AG04450 (cell line): ENCODE measurements at regions of chr10 and their contacts with region 1.

Region 1: DNA sequence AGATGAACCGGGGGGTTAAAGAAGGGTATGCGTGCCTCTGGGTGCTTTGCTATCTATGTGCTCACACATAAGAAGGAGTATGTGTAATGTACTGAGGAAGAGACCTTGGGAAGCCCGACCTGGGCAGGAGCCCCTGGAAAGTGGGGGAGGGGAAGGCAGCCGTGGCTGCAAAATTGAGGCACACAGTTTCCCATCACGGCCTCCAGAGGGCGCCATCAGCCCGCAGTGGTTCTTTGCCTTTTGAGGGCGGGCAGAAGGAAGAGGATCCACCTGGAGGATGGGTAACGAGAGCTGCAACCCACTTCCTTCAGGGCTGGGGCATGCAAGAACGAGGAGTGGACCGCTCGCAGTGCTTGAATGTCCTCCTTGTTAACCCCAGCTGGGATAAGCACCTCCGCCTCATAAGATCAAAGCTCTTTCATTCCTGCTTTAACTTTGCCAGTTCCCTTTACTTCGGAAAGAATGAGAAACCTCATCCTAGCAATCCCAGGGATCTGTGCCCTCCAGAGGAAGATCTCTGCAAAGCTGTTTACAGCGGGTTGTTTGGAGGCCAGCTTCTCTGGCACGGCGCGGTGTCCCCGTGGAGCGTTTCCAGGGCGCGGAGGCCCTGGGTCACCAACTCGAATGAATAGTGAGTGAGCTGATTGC is 77.9 kb downstream of the PCGF5 start:
- DNase-seq: peak; percentile 55
- H3K4me3 ChIP-seq: peak overlapping the region; percentile 54
- H3K27ac ChIP-seq: peak overlapping the region; percentile 21
- H3K27me3 ChIP-seq: no peaks in the 10 kb centered on the region
- CTCF ChIP-seq: peak; percentile 95

Region 2: DNA sequence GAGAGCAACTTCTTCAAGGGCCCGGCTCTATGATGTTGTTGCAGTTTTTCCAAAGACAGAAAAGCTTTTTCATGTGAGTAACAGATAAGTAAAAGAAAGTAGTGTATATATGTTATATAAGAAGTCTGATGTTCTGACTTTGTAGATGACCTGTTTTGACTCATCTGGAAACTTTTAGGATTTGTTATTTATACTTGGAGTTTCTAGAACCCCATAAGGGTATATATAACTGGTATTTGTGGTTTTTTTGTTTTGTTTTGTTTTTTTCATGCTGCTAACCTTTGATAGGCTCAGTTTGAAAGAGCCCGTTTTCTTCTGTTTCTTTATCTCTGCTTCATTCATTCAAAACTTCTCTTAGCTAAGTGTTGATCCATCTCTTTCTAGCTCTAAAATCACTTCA is 419.3 kb before region 1 on chr10:
- CTCF ChIA-PET with region 1: interaction called, 15 read pairs
- POLR2A ChIA-PET with region 1: no interaction called
- DNase-seq: no peak
- H3K4me3 ChIP-seq: no peak overlapping the region
- H3K27ac ChIP-seq: no peak overlapping the region
- H3K27me3 ChIP-seq: no peaks in the 10 kb centered on the region
- CTCF ChIP-seq: no peak

Region 3: DNA sequence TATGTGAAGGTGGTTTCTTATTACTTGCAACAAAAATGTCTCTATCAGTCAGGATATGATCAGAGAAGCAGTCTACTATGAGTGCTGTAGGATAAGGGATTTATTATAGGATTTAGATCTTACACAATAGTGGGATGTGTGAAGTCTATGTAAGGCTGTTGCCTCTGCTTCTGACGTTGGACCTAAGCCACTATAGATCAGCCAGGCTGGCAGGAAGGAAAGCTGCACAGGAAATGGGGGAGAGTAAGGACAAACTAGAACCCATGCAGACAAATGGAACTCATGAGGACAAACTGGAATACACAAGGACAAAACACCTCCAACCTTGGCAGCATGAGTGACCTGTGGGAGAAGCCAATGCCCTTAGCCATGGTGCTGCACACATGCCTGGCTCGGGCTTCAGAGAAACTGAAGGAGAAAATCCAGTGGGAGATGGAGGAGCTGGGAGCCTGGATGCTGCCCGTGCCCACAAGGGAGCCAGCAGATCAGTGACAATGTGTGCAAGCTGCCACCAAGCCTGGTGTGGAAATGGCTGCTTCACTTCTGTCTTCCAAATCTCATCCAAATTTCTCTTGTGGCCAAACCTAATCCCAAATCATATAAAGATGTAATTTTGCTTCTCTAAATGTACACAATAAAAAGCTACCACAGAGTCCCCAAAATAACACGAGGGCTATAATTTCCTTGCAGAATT is 224.9 kb before region 1 on chr10:
- CTCF ChIA-PET with region 1: no interaction called
- POLR2A ChIA-PET with region 1: no interaction called
- DNase-seq: no peak
- H3K4me3 ChIP-seq: no peak overlapping the region
- H3K27ac ChIP-seq: no peak overlapping the region
- H3K27me3 ChIP-seq: peaks cover 7% of the 10 kb centered on the region
- CTCF ChIP-seq: no peak

Region 4: GRCh38 chr10:91313796-91314485 is 15.6 kb after region 1 on chr10:
- CTCF ChIA-PET with region 1: interaction called, 110 read pairs
- POLR2A ChIA-PET with region 1: no interaction called
- DNase-seq: peak; percentile 59
- H3K4me3 ChIP-seq: no peak overlapping the region; the same call in 1 of the 2 replicates
- H3K27ac ChIP-seq: peak overlapping the region; percentile 91
- H3K27me3 ChIP-seq: peaks cover under 1% of the 10 kb centered on the region
- CTCF ChIP-seq: no peak

Region 5: GRCh38 chr10:91367127-91367531 is 68.8 kb after region 1 on chr10:
- CTCF ChIA-PET with region 1: interaction called, 63 read pairs
- POLR2A ChIA-PET with region 1: no interaction called
- DNase-seq: no peak
- H3K4me3 ChIP-seq: no peak overlapping the region
- H3K27ac ChIP-seq: no peak overlapping the region
- H3K27me3 ChIP-seq: no peaks in the 10 kb centered on the region
- CTCF ChIP-seq: no peak

Region 6: GRCh38 chr10:91493313-91493712 is 195.0 kb after region 1 on chr10:
- CTCF ChIA-PET with region 1: interaction called, 12 read pairs
- POLR2A ChIA-PET with region 1: no interaction called
- DNase-seq: no peak
- H3K4me3 ChIP-seq: no peak overlapping the region
- H3K27ac ChIP-seq: no peak overlapping the region
- H3K27me3 ChIP-seq: no peaks in the 10 kb centered on the region
- CTCF ChIP-seq: peak; percentile 38

Region 7: DNA sequence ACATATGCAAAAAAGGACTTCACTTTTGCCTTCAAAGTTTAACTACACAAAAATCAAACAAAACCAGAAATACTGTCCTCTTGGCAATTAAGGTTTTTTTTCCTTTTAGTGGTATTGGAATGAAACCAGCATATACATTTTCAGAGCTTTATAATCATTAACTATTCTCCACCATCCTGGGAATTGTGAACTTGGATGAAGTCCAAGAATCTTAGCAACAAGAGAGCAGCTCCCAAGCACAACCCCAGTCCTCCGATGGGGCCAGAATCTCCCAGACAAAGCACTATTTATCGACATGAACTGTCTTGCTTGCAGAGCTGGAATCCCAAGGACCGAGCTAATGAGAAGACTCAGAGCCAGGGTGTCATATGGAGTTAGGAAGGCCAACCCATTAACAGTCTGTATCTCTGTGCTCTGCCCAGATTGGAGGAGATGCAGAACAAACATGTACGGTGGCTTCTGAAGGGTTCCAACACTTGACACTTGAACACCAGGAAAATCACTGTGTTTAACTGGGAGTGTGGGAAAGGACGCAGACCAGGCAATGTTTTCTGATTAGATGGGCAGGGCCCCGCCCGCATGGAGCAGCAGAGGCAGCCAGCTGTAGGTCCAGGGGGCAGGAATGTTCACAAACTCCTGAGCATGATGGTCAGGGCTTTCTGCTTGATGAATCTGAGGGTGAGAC is 299.0 kb after region 1 on chr10:
- CTCF ChIA-PET with region 1: no interaction called
- POLR2A ChIA-PET with region 1: no interaction called
- DNase-seq: no peak
- H3K4me3 ChIP-seq: no peak overlapping the region
- H3K27ac ChIP-seq: peak overlapping the region; percentile 58
- H3K27me3 ChIP-seq: no peaks in the 10 kb centered on the region
- CTCF ChIP-seq: no peak

Region 8: DNA sequence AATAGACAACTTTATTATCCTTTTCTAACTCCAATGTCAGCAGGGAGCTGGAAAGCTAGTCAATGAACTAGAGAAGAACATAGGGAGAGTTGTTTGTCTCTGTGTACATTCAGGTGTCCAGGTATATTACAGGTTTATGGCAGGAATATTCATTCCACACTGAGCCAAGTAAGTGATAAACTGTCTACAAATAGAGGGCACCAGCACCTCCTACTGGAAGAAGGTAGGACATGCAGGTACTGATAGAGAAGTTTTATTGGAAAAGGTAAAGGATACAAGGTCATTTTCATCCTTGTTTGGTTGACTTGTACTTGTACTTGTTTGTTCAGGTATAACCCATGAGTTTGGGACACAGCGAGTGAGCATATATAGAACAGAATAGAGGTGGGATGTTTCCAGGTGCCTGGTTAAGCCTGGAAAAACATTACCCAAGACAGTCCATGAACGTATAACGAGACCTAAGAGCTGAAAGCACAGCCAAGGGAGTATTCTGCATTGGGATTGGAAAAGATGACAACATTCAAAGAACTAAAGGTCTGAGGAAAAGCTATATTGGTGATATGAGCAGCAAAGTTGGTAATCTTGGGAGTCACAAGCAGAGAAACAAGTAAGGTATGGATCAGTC is 395.9 kb after region 1 on chr10:
- CTCF ChIA-PET with region 1: interaction called, 10 read pairs
- POLR2A ChIA-PET with region 1: no interaction called
- DNase-seq: no peak
- H3K4me3 ChIP-seq: no peak overlapping the region
- H3K27ac ChIP-seq: no peak overlapping the region
- H3K27me3 ChIP-seq: no peaks in the 10 kb centered on the region
- CTCF ChIP-seq: peak; percentile 78